Mammary epithelial cell (primary cell): ENCODE measurements at regions of chr7 and their contacts with region 1.

Region 1: DNA sequence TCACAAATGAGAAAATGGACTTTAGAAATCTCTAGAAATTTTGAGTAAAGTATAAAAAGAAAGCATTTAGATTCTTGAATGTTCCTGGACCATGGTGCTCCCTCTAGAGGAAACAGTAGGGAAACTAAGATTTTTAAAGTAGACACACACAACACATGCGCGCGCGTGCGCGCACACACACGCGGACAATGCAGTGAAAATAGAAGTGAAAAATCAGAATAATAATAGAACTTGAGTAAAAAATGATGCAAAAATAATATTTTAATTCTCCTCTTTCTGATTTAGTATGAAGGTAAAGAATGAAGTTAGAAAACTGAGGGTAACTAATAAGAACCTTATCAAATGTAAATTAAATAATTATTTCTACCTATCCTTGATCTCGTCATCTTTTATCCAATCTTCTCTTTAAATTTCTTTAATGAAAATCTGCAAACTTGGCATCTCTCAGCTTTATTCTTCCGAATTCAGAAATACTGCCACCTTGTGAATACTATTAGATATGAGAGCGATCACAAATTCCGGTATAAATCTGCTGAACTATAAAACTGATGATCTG is 117.0 kb upstream of the AMPH start:
- DNase-seq: no peak
- H3K4me3 ChIP-seq: no peak overlapping the region
- H3K27ac ChIP-seq: no peak overlapping the region
- H3K4me1 ChIP-seq: peaks cover 9% of the 10 kb centered on the region
- H3K27me3 ChIP-seq: no peaks in the 10 kb centered on the region
- CTCF ChIP-seq: peak; percentile 36 to 48

Region 2: DNA sequence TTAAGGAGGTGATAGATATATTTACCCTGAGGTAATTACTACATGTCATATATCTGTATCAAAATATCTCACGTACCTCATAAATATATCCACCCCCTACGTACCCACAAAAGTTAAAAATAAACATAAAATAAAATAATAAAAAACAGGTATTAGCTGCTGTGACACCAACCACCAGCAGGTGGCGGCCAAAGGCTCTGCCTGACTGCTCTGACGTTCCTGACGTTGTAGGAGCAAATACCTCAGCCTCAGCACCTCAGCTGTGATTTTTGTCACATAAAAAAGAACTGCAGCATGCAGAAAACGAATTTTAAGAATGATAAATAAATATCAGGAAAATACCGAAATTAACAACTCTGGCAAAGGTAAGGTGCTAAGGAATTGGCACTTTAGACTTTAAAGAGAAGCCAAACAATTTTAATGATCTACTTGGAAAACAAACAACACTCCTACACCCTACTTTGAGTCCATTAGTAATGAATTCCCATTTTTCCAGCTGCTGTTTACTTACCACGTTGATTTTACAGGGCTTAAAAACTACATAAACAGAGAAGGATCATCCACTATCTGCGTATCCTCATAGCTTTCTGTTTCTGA is 349.3 kb before region 1 on chr7:
- CTCF ChIA-PET with region 1: no interaction called
- dilution Hi-C with region 1: no loop called
- in situ Hi-C with region 1: no loop called
- intact Hi-C with region 1: loop called (anchors 10 kb)
- DNase-seq: peak; percentile 5
- H3K4me3 ChIP-seq: no peak overlapping the region
- H3K27ac ChIP-seq: no peak overlapping the region
- H3K4me1 ChIP-seq: no peaks in the 10 kb centered on the region
- H3K27me3 ChIP-seq: no peaks in the 10 kb centered on the region
- CTCF ChIP-seq: peak; percentile 76 to 86

Region 3: DNA sequence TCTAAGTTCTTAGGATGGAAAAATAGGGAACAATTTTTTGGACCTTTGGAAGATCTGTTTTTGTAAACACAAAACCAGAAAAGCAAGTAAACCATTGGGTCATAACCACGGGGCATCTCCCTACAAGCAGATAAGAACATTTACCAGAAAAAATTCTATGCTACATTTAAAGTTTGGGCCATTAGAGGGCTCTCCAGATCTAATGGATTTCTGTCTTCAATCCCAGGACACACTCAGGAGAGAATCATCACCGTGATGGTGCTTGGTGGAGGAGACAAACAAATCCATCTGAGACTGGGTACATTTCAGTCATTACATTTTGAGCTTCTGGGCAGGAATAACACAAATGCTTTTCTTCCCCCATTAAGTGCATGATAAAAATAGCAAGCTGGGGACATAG is 296.3 kb before region 1 on chr7:
- CTCF ChIA-PET with region 1: no interaction called
- dilution Hi-C with region 1: no loop called
- in situ Hi-C with region 1: no loop called
- intact Hi-C with region 1: loop called (anchors 2 kb)
- DNase-seq: peak; percentile 4
- H3K4me3 ChIP-seq: no peak overlapping the region
- H3K27ac ChIP-seq: no peak overlapping the region
- H3K4me1 ChIP-seq: no peaks in the 10 kb centered on the region
- H3K27me3 ChIP-seq: peaks cover 2% of the 10 kb centered on the region
- CTCF ChIP-seq: peak in 1 of 2 donors; percentile 50

Region 4: DNA sequence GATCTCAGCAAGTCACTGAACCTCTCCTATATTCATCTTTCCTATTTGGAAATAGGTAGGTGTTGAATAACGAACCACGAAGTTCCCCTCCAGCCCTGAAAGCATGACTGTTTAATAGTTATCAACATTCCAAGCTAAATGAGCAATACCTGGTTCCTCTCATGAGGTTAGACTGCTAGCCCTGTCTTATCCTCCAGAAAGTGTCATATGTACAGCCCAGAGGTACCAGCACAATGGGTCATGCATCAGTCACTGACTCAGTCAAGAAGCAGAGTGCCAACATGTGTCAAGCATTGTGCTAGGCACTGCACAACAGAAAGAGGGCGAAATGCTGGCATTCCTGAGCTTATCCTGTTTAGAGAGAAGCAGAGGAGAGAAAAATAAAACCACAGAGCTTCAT is 187.0 kb before region 1 on chr7:
- CTCF ChIA-PET with region 1: no interaction called
- dilution Hi-C with region 1: no loop called
- in situ Hi-C with region 1: no loop called
- intact Hi-C with region 1: loop called (anchors 10 kb)
- DNase-seq: peak; percentile 84
- H3K4me3 ChIP-seq: no peak overlapping the region
- H3K27ac ChIP-seq: peak overlapping the region; percentile 32
- H3K4me1 ChIP-seq: peaks cover 5% of the 10 kb centered on the region
- H3K27me3 ChIP-seq: no peaks in the 10 kb centered on the region
- CTCF ChIP-seq: peak; percentile 38 to 45

Region 5: GRCh38 chr7:38962028-38962427 is 213.9 kb after region 1 on chr7:
- CTCF ChIA-PET with region 1: no interaction called
- dilution Hi-C with region 1: no loop called
- in situ Hi-C with region 1: no loop called
- intact Hi-C with region 1: no loop called
- DNase-seq: no peak
- H3K4me3 ChIP-seq: no peak overlapping the region
- H3K27ac ChIP-seq: no peak overlapping the region
- H3K4me1 ChIP-seq: no peaks in the 10 kb centered on the region
- H3K27me3 ChIP-seq: peaks cover 2% of the 10 kb centered on the region
- CTCF ChIP-seq: no peak